ENCODE measurements at regions of chrX and their contacts with region 1.

Region 1: GRCh38 chrX:3806630-3807029 is 93.2 kb upstream of the PRKX start:
- DNase-seq: no peak
- H3K4me3 ChIP-seq: peak overlapping the region in 1 of 4 donors; percentile 15
- H3K27ac ChIP-seq: peak overlapping the region in 2 of 4 donors; percentile 33 to 55
- H3K4me1 ChIP-seq: peaks cover 0 to 19% (median 0%) of the 10 kb centered on the region in 3 donors
- H3K27me3 ChIP-seq: no peaks in the 10 kb centered on the region
- CTCF ChIP-seq: no peak
- POLR2A ChIP-seq: no peak

Region 2: GRCh38 chrX:3651276-3651675 is 155.4 kb before region 1 on chrX:
- intact Hi-C with region 1: loop called (anchors 5 kb)
- DNase-seq: no peak
- H3K4me3 ChIP-seq: no peak overlapping the region
- H3K27ac ChIP-seq: no peak overlapping the region
- H3K4me1 ChIP-seq: no peaks in the 10 kb centered on the region
- H3K27me3 ChIP-seq: no peaks in the 10 kb centered on the region
- CTCF ChIP-seq: peak; percentile 38 to 56 (median 48)
- POLR2A ChIP-seq: no peak

Measured in esophagus squamous epithelium (tissue), 5 donors.